Activated CD4-positive, alpha-beta T cell treated with anti-CD3 and anti-CD28 coated beads for 36 hours (primary cell): ENCODE measurements at regions of chr16 and their contacts with region 1.

Region 1: GRCh38 chr16:15032547-15033308 is 23.1 kb downstream of the NTAN1 start:
- DNase-seq: no peak
- ATAC-seq: no peak
- H3K4me3 Mint-ChIP-seq: no peak overlapping the region
- H3K27ac Mint-ChIP-seq: peak overlapping the region; percentile 33
- H3K4me1 Mint-ChIP-seq: peaks cover 6% of the 10 kb centered on the region
- H3K27me3 Mint-ChIP-seq: no peaks in the 10 kb centered on the region

Region 2: GRCh38 chr16:14955546-14956231 is 77.0 kb before region 1 on chr16:
- CTCF ChIA-PET with region 1: no interaction called
- POLR2A ChIA-PET with region 1: no interaction called
- intact Hi-C with region 1: no loop called
- DNase-seq: no peak
- ATAC-seq: no peak
- H3K4me3 Mint-ChIP-seq: no peak overlapping the region
- H3K27ac Mint-ChIP-seq: no peak overlapping the region
- H3K4me1 Mint-ChIP-seq: no peaks in the 10 kb centered on the region
- H3K27me3 Mint-ChIP-seq: no peaks in the 10 kb centered on the region

Region 3: GRCh38 chr16:15049581-15050180 is 17.0 kb after region 1 on chr16:
- CTCF ChIA-PET with region 1: interaction called, 3 read pairs
- POLR2A ChIA-PET with region 1: no interaction called
- intact Hi-C with region 1: loop called in 1 of 2 experiments (anchors 2 kb)
- DNase-seq: no peak
- ATAC-seq: no peak
- H3K4me3 Mint-ChIP-seq: no peak overlapping the region
- H3K27ac Mint-ChIP-seq: no peak overlapping the region
- H3K4me1 Mint-ChIP-seq: peaks cover 10% of the 10 kb centered on the region
- H3K27me3 Mint-ChIP-seq: no peaks in the 10 kb centered on the region

Region 4: DNA sequence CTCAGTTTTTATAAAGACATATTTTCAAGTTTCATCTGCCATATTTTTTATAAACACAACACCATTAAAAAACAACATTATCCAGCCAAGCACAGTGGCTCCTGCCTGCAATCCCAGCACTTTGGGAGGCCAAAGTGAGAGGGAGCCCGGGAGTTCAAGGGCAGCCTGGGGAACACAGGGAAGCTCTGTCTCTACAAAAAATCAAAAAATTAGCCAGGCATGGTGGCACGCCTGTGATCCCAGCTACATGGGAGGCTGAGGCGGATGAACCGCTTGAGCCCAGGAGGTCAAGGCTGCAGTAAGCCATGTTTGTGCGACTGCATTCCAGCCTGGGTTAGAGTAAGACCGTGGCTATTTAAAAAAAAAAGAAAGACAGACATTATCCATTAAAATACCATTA is 40.4 kb after region 1 on chr16:
- CTCF ChIA-PET with region 1: no interaction called
- POLR2A ChIA-PET with region 1: no interaction called
- intact Hi-C with region 1: no loop called
- DNase-seq: no peak
- ATAC-seq: no peak
- H3K4me3 Mint-ChIP-seq: no peak overlapping the region
- H3K27ac Mint-ChIP-seq: no peak overlapping the region
- H3K4me1 Mint-ChIP-seq: peaks cover 5% of the 10 kb centered on the region
- H3K27me3 Mint-ChIP-seq: no peaks in the 10 kb centered on the region

Region 5: GRCh38 chr16:15482068-15482747 is 449.5 kb after region 1 on chr16:
- CTCF ChIA-PET with region 1: no interaction called
- POLR2A ChIA-PET with region 1: no interaction called
- intact Hi-C with region 1: no loop called
- DNase-seq: peak; percentile 75
- ATAC-seq: peak; percentile 96
- H3K4me3 Mint-ChIP-seq: no peak overlapping the region
- H3K27ac Mint-ChIP-seq: peak overlapping the region; percentile 61
- H3K4me1 Mint-ChIP-seq: peaks cover 24% of the 10 kb centered on the region
- H3K27me3 Mint-ChIP-seq: peaks cover 2% of the 10 kb centered on the region